Common myeloid progenitor, CD34-positive (primary cell): ENCODE measurements at regions of chr17 and their contacts with region 1.

Region 1: GRCh38 chr17:39668199-39668966 is at the start of gene PNMT:
- DNase-seq: peak; percentile 68 to 80 (median 75)
- H3K4me3 ChIP-seq: peak within 1 kb of the TSS in 5 of 7 experiments; percentile 17 to 63 (median 41)
- H3K27ac ChIP-seq: peak within 1 kb of the TSS in 1 of 2 experiments; percentile 43
- H3K4me1 ChIP-seq: peaks cover 0 to 56% (median 31%) of the 10 kb centered on the region in 4 experiments
- H3K27me3 ChIP-seq: peaks cover 0 to 31% (median 11%) of the 10 kb centered on the region in 5 experiments

Region 2: DNA sequence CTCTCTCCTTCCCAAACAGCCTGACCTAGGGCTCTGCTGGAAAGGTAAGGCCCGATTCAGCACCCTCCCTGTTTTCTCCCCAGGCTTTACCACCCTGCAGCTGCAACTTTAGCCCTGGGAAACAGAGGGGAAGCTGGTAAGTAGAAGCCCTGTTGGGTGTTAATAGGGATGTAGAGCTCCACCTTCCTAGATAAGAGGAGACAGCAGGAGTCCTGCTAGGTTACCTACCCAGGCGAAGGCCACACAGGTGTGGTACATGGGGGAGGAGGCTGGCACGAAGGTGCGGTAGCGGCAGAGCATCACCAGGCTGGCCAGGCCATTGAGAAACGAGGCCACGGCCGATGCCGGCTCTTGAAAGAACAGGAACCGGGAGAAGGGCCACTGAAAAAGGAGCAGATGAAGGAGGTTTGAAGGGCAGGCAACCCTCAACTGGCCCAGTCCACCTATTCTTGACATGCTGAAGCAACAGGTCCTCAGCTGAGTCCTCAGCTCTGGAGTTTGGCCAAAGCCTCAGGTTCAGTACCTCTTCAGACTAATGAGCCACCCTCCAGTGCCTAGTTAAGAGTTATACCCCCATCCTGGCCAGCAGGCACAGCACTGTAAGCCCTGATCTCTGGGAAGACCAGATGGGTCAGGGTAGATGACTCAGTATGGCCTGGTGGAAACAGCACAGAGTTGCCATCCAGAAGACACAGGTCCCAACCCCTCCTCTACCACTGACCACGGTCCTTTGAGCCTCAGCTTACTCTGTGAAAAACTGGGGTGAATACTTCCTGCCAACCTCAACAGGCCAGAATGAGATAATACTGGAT is 16.2 kb after region 1 on chr17:
- CTCF ChIA-PET with region 1: interaction called, 27 read pairs
- POLR2A ChIA-PET with region 1: no interaction called
- DNase-seq: no peak
- H3K4me3 ChIP-seq: no peak overlapping the region
- H3K27ac ChIP-seq: no peak overlapping the region
- H3K4me1 ChIP-seq: peaks cover 7 to 30% (median 20%) of the 10 kb centered on the region in 4 experiments
- H3K27me3 ChIP-seq: no peaks in the 10 kb centered on the region

Region 3: DNA sequence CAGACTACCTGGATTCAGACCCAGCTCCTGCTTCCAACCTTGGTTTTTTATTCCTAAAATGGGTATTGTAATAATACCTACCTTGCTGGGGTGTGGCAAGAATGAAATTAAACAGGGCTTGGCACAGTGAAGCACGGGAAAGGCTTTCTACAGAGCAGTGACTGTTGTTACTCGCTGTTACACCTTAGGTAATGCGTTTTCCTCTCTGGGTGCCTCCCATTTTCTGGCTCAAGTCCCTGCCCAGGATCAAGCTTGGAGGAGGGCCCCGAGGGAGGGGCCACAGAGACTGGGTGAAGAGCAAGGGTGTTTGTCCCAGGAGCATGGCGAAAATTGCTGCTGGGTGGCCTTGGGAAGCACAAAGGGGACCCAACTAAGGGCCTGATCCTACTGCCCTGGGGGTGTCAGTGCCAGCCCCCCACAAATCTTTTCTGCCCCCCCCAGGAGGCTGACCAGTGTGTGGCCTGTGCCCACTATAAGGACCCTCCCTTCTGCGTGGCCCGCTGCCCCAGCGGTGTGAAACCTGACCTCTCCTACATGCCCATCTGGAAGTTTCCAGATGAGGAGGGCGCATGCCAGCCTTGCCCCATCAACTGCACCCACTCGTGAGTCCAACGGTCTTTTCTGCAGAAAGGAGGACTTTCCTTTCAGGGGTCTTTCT is 48.6 kb after region 1 on chr17:
- CTCF ChIA-PET with region 1: no interaction called
- POLR2A ChIA-PET with region 1: no interaction called
- DNase-seq: no peak
- H3K4me3 ChIP-seq: no peak overlapping the region
- H3K27ac ChIP-seq: no peak overlapping the region
- H3K4me1 ChIP-seq: no peaks in the 10 kb centered on the region
- H3K27me3 ChIP-seq: no peaks in the 10 kb centered on the region

Region 4: DNA sequence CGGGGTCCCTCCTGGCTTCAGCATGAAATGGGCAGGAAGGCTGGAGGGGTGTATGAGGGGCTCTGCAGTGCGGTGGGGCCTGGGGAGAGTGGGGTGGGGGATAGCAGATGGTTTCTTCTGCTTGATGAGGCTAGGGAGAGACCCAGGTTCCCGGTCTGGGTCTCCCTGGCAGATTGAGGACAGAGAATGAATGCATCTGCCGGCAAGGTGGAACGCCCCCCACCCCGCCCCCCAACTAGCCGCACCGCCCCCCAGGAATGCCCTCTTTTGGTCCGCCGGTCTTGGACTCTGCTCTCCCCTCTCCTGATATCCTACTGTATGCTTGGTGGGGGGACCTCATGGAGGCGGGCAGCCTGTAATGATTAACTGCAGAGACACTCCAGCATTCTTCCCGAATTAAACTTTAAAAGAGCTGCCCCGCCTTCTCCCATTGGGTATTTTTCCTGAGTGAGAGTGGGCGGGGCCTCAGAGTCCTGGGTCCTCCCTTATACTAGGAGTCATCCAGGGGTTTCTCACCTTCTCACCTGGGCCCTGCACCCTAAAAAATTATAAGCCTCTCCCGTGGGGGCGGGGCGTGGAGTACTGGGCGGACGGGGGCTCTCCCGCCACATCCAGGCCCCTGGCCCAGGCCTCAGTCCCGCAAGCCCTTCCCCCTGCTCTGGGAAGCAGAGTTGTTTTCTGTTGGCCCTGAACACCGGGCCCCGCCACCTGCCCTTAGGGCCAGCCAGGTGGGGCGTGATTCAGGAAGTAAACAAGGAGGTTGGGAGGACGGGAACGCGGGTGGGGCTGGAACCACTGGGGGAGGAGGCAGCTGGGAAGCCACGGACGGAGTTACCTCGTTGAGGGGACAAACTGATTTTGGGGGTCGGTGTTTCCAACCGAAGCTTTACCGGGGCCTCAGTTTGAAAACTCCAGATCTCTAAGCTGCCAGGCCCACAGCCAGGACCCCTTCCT is 70.8 kb after region 1 on chr17:
- CTCF ChIA-PET with region 1: no interaction called
- POLR2A ChIA-PET with region 1: no interaction called
- DNase-seq: no peak
- H3K4me3 ChIP-seq: peak overlapping the region in 2 of 7 experiments; percentile 23 to 55
- H3K27ac ChIP-seq: no peak overlapping the region
- H3K4me1 ChIP-seq: peaks cover 0 to 25% (median 10%) of the 10 kb centered on the region in 4 experiments
- H3K27me3 ChIP-seq: peaks cover 0 to 80% (median 48%) of the 10 kb centered on the region in 5 experiments